PC-9 (cell line): ENCODE measurements at regions of chr2 and their contacts with region 1.

Region 1: DNA sequence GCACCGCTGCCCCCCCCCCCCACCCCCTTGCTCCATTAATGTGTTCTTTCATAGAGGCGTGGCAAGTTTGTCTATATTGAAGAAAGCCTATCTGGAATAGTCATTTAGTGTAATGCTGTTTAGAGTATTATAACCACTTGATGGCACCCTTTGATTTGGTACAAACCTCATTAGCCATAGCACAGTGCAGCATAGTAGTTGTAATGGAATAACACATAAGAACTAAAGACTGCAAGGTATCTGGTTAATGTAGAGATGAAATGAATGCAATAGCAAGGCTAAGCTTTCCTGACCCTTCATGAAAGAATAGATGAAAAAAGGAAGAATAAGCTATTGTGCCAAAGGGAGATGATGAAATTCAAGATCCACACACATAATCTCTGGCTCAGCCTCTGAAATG is 81.9 kb downstream of the EHBP1 start:
- DNase-seq: peak in 1 of 2 experiments; percentile 38
- H3K4me3 ChIP-seq: no peak overlapping the region
- H3K27ac ChIP-seq: no peak overlapping the region
- H3K4me1 ChIP-seq: no peaks in the 10 kb centered on the region
- H3K27me3 ChIP-seq: no peaks in the 10 kb centered on the region
- CTCF ChIP-seq: peak; percentile 54

Region 2: GRCh38 chr2:63050334-63051041 is 263.1 kb after region 1 on chr2 and contains the start of gene OTX1:
- CTCF ChIA-PET with region 1: interaction called, 24 read pairs
- POLR2A ChIA-PET with region 1: no interaction called
- intact Hi-C with region 1: no loop called
- DNase-seq: peak; percentile 77 to 93
- H3K4me3 ChIP-seq: peak within 1 kb of the TSS; percentile 100
- H3K27ac ChIP-seq: peak within 1 kb of the TSS; percentile 28
- H3K4me1 ChIP-seq: 0 out of 2 replicates have a peak, but pooled peaks cover 6% of the 10 kb centered on the region
- H3K27me3 ChIP-seq: no peaks in the 10 kb centered on the region
- CTCF ChIP-seq: no peak
- total RNA-seq, gene OTX1: 6.8 and 7.0 TPM in 2 replicates

Region 3: DNA sequence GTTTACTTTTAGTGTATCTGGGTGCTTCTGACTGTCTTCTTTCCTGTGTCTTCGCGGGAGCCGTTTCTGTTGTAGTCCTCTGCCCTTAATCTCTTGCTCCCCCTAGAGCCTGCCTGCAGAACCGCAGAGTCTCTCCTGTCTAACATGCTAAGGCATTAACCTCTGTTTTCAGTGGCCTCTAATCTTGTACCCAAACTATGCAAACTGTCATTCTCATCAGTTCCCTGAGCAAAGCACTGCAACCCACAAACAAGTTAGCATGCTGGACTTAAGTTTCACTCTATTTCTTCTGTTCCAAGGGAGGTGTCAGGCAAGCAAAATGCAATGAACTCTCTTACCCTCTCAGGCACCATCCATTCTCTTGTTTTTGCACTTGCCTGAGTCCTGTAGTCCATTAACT is 401.6 kb after region 1 on chr2:
- CTCF ChIA-PET with region 1: no interaction called
- POLR2A ChIA-PET with region 1: no interaction called
- intact Hi-C with region 1: loop called (anchors 2 kb)
- DNase-seq: peak; percentile 33 to 47
- H3K4me3 ChIP-seq: peak overlapping the region; percentile 10; the same call in 1 of the 2 replicates
- H3K27ac ChIP-seq: no peak overlapping the region
- H3K4me1 ChIP-seq: no peaks in the 10 kb centered on the region
- H3K27me3 ChIP-seq: no peaks in the 10 kb centered on the region
- CTCF ChIP-seq: peak; percentile 94

Region 4: DNA sequence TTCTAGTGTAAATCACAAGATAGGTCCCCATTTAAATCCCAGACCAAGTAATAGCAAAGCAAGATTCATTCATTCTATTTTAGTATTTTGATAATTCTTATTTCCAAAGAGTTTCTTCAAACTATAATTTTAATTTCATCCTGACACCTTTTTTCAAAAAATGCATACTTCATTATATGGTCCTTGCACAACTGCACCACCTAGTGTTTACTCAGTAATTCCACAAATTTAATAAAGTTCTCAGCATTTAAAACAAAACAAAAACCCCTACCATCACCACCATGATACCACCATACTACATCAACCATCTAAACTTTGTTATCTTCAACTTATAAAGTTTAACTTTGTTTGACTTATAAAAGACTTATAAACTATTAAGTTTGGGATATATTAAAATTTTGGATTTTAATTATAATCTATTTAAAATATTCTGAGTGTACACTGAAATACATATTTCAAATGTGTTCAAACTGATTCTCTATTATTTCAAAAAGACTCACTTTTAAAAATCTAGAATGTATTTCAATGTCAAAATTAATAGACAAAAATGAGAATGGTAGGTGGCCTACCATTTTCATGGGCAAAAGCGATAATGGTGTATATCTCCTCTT is 756.7 kb after region 1 on chr2:
- CTCF ChIA-PET with region 1: no interaction called
- POLR2A ChIA-PET with region 1: no interaction called
- intact Hi-C with region 1: loop called (anchors 2 kb)
- DNase-seq: no peak
- H3K4me3 ChIP-seq: no peak overlapping the region
- H3K27ac ChIP-seq: no peak overlapping the region
- H3K4me1 ChIP-seq: no peaks in the 10 kb centered on the region
- H3K27me3 ChIP-seq: no peaks in the 10 kb centered on the region
- CTCF ChIP-seq: peak; percentile 78